ENCODE measurements at regions of chr14 and their contacts with region 1.

Region 1: GRCh38 chr14:69715725-69716477 is 51.0 kb upstream of the SRSF5 start:
- DNase-seq: peak in 1 of 2 donors; percentile 91
- H3K4me3 ChIP-seq: peak overlapping the region in 1 of 2 donors; percentile 3
- H3K27ac ChIP-seq: peak overlapping the region; percentile 57 to 73
- H3K4me1 ChIP-seq: peaks cover 15 to 39% of the 10 kb centered on the region in 2 donors
- H3K27me3 ChIP-seq: no peaks in the 10 kb centered on the region
- CTCF ChIP-seq: no peak

Region 2: GRCh38 chr14:69673578-69674305 is 42.2 kb before region 1 on chr14:
- intact Hi-C with region 1: loop called (anchors 5 kb)
- DNase-seq: no peak
- H3K4me3 ChIP-seq: no peak overlapping the region
- H3K27ac ChIP-seq: peak overlapping the region; percentile 62 to 64
- H3K4me1 ChIP-seq: peaks cover 7 to 60% of the 10 kb centered on the region in 2 donors
- H3K27me3 ChIP-seq: no peaks in the 10 kb centered on the region
- CTCF ChIP-seq: no peak

Region 3: GRCh38 chr14:69685716-69686115 is 30.2 kb before region 1 on chr14:
- intact Hi-C with region 1: no loop called
- DNase-seq: no peak
- H3K4me3 ChIP-seq: no peak overlapping the region
- H3K27ac ChIP-seq: no peak overlapping the region
- H3K4me1 ChIP-seq: peaks cover 4 to 26% of the 10 kb centered on the region in 2 donors
- H3K27me3 ChIP-seq: no peaks in the 10 kb centered on the region
- CTCF ChIP-seq: no peak

Region 4: GRCh38 chr14:70383000-70383399 is 667.1 kb after region 1 on chr14:
- intact Hi-C with region 1: no loop called
- DNase-seq: no peak
- H3K4me3 ChIP-seq: no peak overlapping the region
- H3K27ac ChIP-seq: no peak overlapping the region
- H3K4me1 ChIP-seq: no peaks in the 10 kb centered on the region
- H3K27me3 ChIP-seq: no peaks in the 10 kb centered on the region
- CTCF ChIP-seq: no peak

Measured in ascending aorta (tissue), 2 donors.